ENCODE measurements at regions of chr1 and their contacts with region 1.

Region 1: GRCh38 chr1:32650752-32651460 is at the start of gene RBBP4:
- DNase-seq: peak; percentile 98
- ATAC-seq: peak; percentile 93
- H3K4me3 Mint-ChIP-seq: peak within 1 kb of the TSS; percentile 99
- H3K27ac Mint-ChIP-seq: peak within 1 kb of the TSS; percentile 100
- H3K4me1 Mint-ChIP-seq: peaks cover 33% of the 10 kb centered on the region
- H3K27me3 Mint-ChIP-seq: no peaks in the 10 kb centered on the region; the same call in 1 of the 2 replicates
- CTCF ChIP-seq: no peak
- total RNA-seq, gene RBBP4: 331 to 339 TPM (median 333 TPM) in 3 replicates

Region 2: GRCh38 chr1:32394141-32394889 is 256.6 kb before region 1 on chr1 and contains the start of gene BSDC1:
- CTCF ChIA-PET with region 1: interaction called, 6 read pairs
- POLR2A ChIA-PET with region 1: interaction called, 11 read pairs
- DNase-seq: peak; percentile 99
- ATAC-seq: peak; percentile 97
- H3K4me3 Mint-ChIP-seq: peak within 1 kb of the TSS; percentile 98
- H3K27ac Mint-ChIP-seq: peak within 1 kb of the TSS; percentile 100
- H3K4me1 Mint-ChIP-seq: peaks cover 12% of the 10 kb centered on the region
- H3K27me3 Mint-ChIP-seq: no peaks in the 10 kb centered on the region
- CTCF ChIP-seq: no peak
- total RNA-seq, gene BSDC1: 42.4 to 44.3 TPM (median 43.6 TPM) in 3 replicates

Region 3: GRCh38 chr1:32636914-32637645 is 13.8 kb before region 1 on chr1:
- CTCF ChIA-PET with region 1: interaction called, 5 read pairs
- POLR2A ChIA-PET with region 1: interaction called, 10 read pairs
- DNase-seq: no peak
- ATAC-seq: peak; percentile 57
- H3K4me3 Mint-ChIP-seq: no peak overlapping the region; the same call in 1 of the 2 replicates
- H3K27ac Mint-ChIP-seq: peak overlapping the region; percentile 89
- H3K4me1 Mint-ChIP-seq: peaks cover 56% of the 10 kb centered on the region
- H3K27me3 Mint-ChIP-seq: no peaks in the 10 kb centered on the region
- CTCF ChIP-seq: no peak

Region 4: GRCh38 chr1:32684167-32684811 is 33.4 kb after region 1 on chr1:
- CTCF ChIA-PET with region 1: no interaction called
- POLR2A ChIA-PET with region 1: no interaction called
- DNase-seq: no peak
- ATAC-seq: no peak
- H3K4me3 Mint-ChIP-seq: no peak overlapping the region
- H3K27ac Mint-ChIP-seq: peak overlapping the region; percentile 10; the same call in 1 of the 2 replicates
- H3K4me1 Mint-ChIP-seq: no peaks in the 10 kb centered on the region
- H3K27me3 Mint-ChIP-seq: no peaks in the 10 kb centered on the region
- CTCF ChIP-seq: no peak

Region 5: GRCh38 chr1:32748348-32748747 is 97.4 kb after region 1 on chr1:
- CTCF ChIA-PET with region 1: no interaction called
- POLR2A ChIA-PET with region 1: no interaction called
- DNase-seq: no peak
- ATAC-seq: 0 out of 2 replicates have a peak, but pooled peaks have one; percentile 16
- H3K4me3 Mint-ChIP-seq: no peak overlapping the region
- H3K27ac Mint-ChIP-seq: no peak overlapping the region
- H3K4me1 Mint-ChIP-seq: peaks cover 21% of the 10 kb centered on the region
- H3K27me3 Mint-ChIP-seq: no peaks in the 10 kb centered on the region
- CTCF ChIP-seq: no peak